ENCODE measurements at regions of chr1 and their contacts with region 1.

Region 1: GRCh38 chr1:59007820-59008598 is 224.2 kb upstream of the JUN start:
- DNase-seq: no peak
- H3K4me3 Mint-ChIP-seq: no peak overlapping the region
- H3K27ac Mint-ChIP-seq: peak overlapping the region; percentile 85
- H3K4me1 Mint-ChIP-seq: peaks cover 55% of the 10 kb centered on the region
- H3K27me3 Mint-ChIP-seq: no peaks in the 10 kb centered on the region

Region 2: DNA sequence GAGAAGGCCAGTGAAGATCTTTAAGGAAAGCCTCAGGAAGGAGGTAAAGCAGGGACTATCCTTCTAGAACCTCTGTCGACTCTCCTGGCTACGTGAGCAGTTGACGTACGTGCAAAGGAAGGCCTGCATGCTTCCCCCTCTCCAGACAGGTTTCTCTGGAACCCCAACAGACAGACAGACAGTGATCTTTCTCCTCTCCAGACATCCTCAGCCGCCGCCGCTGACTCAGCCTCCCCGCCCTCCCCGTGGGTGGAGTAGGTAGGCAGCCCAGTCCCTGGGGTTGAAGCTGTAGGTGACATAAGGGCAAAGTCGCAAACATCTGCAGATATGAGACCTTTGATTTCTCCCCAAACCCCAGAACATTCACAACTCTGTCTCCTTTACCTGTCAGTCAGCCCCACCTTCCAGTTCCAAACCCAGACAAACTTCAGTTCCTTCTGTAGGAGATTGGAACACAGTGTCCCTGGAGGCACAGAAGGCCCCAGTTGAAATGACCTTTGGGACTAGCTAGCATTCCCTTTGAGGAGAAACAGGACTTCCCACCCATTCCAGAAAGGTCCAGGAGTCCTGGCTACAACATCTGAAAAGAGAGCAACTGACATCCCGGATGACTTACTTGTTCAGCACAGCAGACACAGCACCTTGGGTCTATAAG is 78.2 kb before region 1 on chr1:
- intact Hi-C with region 1: loop called (anchors 5 kb)
- DNase-seq: peak; percentile 34
- H3K4me3 Mint-ChIP-seq: no peak overlapping the region
- H3K27ac Mint-ChIP-seq: peak overlapping the region; percentile 6
- H3K4me1 Mint-ChIP-seq: peaks cover 51% of the 10 kb centered on the region
- H3K27me3 Mint-ChIP-seq: no peaks in the 10 kb centered on the region

Region 3: DNA sequence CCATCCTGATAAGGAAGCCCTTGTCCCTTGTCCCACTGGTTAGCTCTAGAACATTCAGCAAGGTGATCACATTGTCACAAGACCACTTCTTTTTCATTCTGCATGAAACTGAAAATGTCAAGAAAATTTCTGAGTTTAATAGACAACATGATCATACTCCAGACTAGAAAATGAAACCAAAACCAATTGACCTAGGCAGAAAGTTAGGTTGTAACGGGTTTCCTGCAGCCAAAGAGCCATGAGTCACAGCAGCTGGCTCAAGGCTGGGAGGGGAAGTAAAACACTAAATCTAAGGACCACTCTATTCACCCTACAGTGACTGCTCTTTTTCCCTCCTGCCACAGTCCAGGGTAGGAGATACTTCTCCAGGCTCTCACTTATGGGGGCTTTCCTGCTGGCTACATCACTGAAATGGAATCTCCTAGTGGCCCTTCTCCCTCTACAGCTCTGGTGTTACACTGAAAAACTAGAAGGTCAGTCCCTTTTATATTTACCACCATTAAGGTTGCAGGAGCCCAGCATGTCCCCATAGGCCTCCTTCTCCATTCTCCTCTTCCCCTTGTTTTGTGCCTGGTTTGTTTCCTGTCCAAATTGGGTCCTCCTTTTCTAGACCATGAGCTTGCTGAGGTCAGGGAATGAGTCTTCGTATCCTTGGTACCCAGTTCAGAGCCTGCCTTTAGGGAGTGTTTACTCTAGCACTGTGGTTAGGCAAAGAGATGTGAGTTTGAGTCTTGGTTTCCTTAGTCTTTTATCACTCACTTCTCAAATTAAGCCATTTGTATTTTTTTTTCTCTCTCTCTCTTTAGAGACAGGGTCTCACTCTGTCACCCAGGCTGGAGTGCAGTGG is 12.4 kb after region 1 on chr1:
- intact Hi-C with region 1: loop called (anchors 1 kb)
- DNase-seq: peak; percentile 44
- H3K4me3 Mint-ChIP-seq: peak overlapping the region; percentile 64
- H3K27ac Mint-ChIP-seq: peak overlapping the region; percentile 98
- H3K4me1 Mint-ChIP-seq: peaks cover 50% of the 10 kb centered on the region
- H3K27me3 Mint-ChIP-seq: no peaks in the 10 kb centered on the region

Region 4: DNA sequence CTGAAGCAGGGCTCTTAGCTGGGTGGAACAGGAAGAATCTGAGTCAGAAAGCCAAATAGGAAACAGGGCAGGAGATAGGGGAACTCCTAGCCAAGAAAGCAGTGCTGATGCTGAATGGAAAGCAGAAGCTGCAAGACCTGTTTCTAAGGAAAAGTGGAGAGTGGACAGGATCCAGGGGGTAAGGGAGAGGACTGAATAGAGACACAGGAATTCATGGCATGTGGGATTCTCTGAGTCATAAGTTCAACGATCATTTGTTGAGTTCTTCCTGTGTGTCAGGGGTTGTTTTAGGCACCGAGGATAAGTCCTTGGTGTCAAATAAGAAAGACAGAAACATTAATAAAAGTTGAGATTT is 135.1 kb after region 1 on chr1:
- intact Hi-C with region 1: loop called (anchors 5 kb)
- DNase-seq: no peak
- H3K4me3 Mint-ChIP-seq: no peak overlapping the region
- H3K27ac Mint-ChIP-seq: peak overlapping the region; percentile 62
- H3K4me1 Mint-ChIP-seq: peaks cover 59% of the 10 kb centered on the region
- H3K27me3 Mint-ChIP-seq: no peaks in the 10 kb centered on the region